ENCODE measurements at regions of chr4 and their contacts with region 1.

Region 1: DNA sequence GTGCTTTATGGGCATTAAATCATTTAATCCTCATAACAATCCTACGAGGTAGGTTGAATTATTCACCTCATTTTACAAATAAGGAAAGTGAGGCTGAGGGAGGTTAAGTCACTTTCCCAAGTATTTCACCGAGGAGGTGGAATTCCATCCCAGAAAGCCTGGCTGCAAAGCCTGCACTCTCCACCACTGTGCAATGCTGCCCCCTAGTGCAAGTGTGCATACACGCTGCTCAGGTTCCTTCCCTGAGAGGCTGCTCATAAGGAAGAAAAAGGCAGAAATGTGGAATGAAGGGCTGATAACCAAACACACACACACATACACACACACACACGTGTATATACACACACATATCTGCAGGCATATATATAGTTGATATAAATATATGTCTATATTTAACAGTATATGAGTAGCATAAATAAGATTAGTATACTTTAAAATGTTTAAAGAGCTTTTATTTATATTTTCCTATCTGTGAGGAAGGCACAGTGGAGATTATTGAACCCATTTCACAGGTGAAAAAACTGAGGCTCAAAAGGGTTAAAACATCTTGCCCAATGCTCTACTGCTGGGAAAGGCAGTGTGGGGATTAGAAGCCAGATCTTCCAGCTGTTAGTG is 714.5 kb upstream of the TENM3 start:
- DNase-seq: peak; percentile 25 to 66 (median 63)
- ATAC-seq: peak; percentile 55 to 85 (median 80)
- H3K4me3 ChIP-seq: no peak overlapping the region
- H3K27ac ChIP-seq: no peak overlapping the region
- H3K4me1 ChIP-seq: no peaks in the 10 kb centered on the region
- H3K27me3 ChIP-seq: peaks cover 0 to 4% (median 0%) of the 10 kb centered on the region in 9 donors
- CTCF ChIP-seq: peak; percentile 59 to 81 (median 68)
- POLR2A ChIP-seq: no peak

Region 2: DNA sequence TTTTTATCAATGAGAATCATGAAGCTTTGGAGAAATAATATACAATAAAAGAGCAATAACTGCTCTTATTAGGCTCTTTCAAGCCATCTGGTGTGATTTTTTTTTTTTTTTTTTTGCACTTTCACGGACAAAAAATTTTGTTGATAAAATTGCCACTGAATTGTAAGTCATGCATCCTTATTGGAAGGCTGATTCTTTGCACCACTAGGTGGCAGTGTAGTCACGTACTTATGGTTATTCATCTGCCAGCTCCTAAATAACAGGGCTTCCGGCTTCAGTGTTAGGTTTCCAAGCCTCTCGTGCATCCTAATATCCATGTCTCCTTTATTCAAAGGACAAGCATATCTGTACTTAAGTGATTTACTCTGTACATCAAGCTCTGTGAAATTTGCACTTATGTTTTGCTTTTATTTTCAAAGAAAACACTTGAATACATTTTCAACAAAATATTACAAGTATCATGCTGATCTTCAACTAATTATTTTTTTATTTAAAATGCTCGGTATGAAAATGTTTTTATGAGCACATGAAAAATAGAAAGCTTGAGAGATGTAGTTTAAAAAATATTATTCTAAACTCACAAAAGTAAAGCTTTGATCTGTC is 863.8 kb before region 1 on chr4:
- intact Hi-C with region 1: loop called in 1 of 10 experiments (anchors 5 kb)
- DNase-seq: peak in 4 of 5 donors; percentile 28 to 56 (median 42)
- ATAC-seq: peak in 2 of 4 donors; percentile 39 to 71
- H3K4me3 ChIP-seq: no peak overlapping the region
- H3K27ac ChIP-seq: no peak overlapping the region
- H3K4me1 ChIP-seq: peaks cover 0 to 4% (median 0%) of the 10 kb centered on the region in 12 donors
- H3K27me3 ChIP-seq: no peaks in the 10 kb centered on the region
- CTCF ChIP-seq: peak; percentile 58 to 82 (median 72)
- POLR2A ChIP-seq: no peak

Region 3: DNA sequence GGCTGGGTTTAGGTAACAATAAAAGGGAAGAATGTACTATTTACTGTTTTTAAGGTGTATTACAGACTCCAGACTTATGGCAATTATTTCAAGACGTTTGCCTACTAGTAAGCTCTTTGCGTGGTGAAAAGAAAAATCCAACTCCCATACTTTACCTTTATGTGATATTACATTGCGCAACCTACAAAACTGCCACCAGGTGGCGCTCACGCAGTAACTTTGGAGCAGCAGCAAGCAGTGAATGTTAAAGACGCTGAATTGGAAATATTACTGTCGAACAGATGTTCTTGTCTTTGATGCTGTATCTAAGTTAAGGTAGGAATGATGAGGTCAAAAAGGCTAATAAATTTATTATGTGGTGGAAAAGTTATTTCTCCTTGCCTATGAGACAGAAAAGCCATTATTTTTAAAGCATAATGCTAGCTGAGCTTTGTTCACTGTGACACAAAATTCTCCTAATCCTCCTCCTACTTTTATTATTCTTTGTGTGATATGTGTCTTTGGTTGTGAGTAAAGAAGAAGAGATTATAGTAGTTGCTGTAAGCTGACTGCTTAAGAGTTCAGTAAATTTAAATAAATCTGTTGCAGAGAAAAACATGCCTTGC is 385.3 kb before region 1 on chr4:
- intact Hi-C with region 1: loop called in 9 of 10 experiments (anchors 1 to 2 kb)
- DNase-seq: peak; percentile 47 to 80 (median 67)
- ATAC-seq: peak in 3 of 4 donors; percentile 32 to 65 (median 60)
- H3K4me3 ChIP-seq: no peak overlapping the region
- H3K27ac ChIP-seq: no peak overlapping the region
- H3K4me1 ChIP-seq: no peaks in the 10 kb centered on the region
- H3K27me3 ChIP-seq: peaks cover 0 to 15% (median 0%) of the 10 kb centered on the region in 9 donors
- CTCF ChIP-seq: peak; percentile 82 to 95 (median 90)
- POLR2A ChIP-seq: no peak

Region 4: GRCh38 chr4:181261279-181261678 is 267.4 kb before region 1 on chr4:
- intact Hi-C with region 1: loop called in 9 of 10 experiments (anchors 2 to 10 kb)
- DNase-seq: no peak
- ATAC-seq: peak in 3 of 4 donors; percentile 41 to 58 (median 55)
- H3K4me3 ChIP-seq: no peak overlapping the region
- H3K27ac ChIP-seq: no peak overlapping the region
- H3K4me1 ChIP-seq: peaks cover 0 to 4% (median 0%) of the 10 kb centered on the region in 12 donors
- H3K27me3 ChIP-seq: no peaks in the 10 kb centered on the region
- CTCF ChIP-seq: peak in 10 of 12 donors; percentile 11 to 53 (median 34)
- POLR2A ChIP-seq: no peak

Region 5: DNA sequence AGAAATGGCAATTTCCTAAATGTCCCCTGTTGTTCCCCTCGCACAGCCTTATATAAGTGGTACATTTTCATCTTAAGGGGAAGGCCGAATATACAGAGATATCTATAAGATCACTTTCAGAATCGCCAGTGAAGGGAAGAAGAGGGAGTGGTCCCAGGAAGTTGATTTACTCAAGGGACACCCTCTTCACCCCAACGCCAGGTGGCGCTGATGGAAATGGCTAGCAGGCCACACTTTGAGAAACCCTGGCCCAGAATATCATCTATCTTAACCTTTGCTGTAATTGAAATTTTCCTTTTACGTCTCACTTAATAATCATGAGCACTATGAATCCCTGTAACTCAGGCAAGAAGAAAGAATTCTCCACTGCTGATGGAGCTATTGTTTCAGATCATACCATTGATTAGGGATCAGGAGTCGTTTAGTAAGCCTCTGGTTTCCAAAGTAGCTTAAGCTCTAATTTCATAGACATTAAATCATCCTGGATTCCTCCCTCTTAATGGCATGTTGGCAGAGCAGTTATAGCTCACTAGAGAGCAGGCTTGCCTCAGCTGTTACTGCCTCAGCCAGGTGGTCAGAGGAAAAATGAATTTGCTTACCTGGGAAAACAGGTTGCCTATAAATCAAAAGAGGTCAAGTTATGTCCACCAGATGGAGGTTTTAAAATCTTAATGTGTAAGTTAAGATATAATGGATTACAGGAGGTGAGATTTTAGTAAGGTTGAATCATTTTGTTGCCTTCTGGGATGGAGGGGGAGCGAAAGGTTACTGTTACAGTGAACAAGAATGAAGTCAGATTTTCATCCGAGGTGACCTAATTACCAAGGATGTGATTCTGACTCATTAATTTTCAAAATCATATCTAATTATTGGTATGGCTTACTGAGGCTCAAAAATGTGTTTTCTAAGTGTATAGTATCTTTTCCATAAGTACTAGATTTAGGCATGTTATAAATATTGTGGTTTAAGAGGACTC is 226.7 kb before region 1 on chr4:
- intact Hi-C with region 1: loop called in 3 of 10 experiments (anchors 5 to 10 kb)
- DNase-seq: peak in 1 of 5 donors; percentile 29
- ATAC-seq: peak; percentile 22 to 73 (median 60)
- H3K4me3 ChIP-seq: no peak overlapping the region
- H3K27ac ChIP-seq: no peak overlapping the region
- H3K4me1 ChIP-seq: peaks cover 0 to 4% (median 0%) of the 10 kb centered on the region in 12 donors
- H3K27me3 ChIP-seq: no peaks in the 10 kb centered on the region
- CTCF ChIP-seq: peak in 9 of 12 donors; percentile 9 to 38 (median 26)
- POLR2A ChIP-seq: no peak